ENCODE measurements at regions of chr19 and their contacts with region 1.

Region 1: GRCh38 chr19:1094975-1095701 is at the start of gene POLR2E:
- DNase-seq: peak; percentile 98
- H3K4me3 Mint-ChIP-seq: peak within 1 kb of the TSS; percentile 94
- H3K27ac Mint-ChIP-seq: peak within 1 kb of the TSS; percentile 97
- H3K4me1 Mint-ChIP-seq: peaks cover 41% of the 10 kb centered on the region
- H3K27me3 Mint-ChIP-seq: peaks cover 2% of the 10 kb centered on the region
- total RNA-seq, gene POLR2E: 265 and 282 TPM in 2 replicates

Region 2: DNA sequence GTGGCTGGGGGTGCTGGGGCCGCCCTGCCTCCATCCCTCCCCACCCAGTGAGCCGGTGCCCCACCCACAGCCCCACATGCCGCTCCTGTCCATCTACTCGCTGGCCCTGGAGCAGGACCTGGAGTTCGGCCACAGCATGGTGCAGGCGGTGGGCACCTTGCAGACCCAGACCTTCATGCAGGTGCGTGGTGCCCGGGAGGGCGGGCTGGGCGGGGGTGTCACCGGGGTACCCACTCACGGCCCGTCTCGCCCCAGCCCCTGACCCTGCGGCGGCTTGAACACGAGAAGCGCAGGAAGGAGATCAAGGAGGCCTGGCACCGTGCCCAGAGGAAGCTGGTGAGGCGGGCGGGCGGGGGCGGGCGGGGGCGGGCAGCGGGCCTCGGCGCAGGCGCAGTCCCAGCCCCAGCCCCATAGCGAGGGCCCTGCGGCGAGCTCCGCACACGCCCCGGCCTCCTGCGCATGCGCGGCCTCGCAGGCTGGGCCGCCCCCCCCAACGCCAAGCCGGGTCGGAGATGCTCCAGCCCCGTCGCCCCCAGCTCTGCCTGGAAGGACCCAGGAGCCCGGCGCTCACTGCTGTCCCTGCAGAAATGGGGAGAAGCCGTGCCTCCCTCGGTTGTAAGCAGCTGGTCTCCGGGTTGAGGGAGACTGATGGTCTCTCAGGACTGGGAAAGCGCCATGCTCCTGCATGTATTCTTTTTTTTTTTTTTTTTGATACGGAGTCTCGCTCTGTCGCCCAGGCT is 20.4 kb before region 1 on chr19:
- intact Hi-C with region 1: loop called (anchors 1 kb)
- DNase-seq: peak; percentile 69
- H3K4me3 Mint-ChIP-seq: peak overlapping the region; percentile 79
- H3K27ac Mint-ChIP-seq: peak overlapping the region; percentile 90
- H3K4me1 Mint-ChIP-seq: peaks cover 35% of the 10 kb centered on the region
- H3K27me3 Mint-ChIP-seq: no peaks in the 10 kb centered on the region